A549 (cell line): ENCODE measurements at regions of chr3 and their contacts with region 1.

Region 1: GRCh38 chr3:78633626-78634025 is 1134.2 kb downstream of the ROBO1 start:
- DNase-seq: no peak
- ATAC-seq: no peak
- H3K4me3 ChIP-seq: no peak overlapping the region
- H3K27ac ChIP-seq: no peak overlapping the region
- H3K4me1 ChIP-seq: no peaks in the 10 kb centered on the region
- CTCF ChIP-seq: no peak
- EP300 ChIP-seq: no peak
- POLR2A ChIP-seq: no peak
- RAD21 ChIP-seq: no peak

Region 2: GRCh38 chr3:78645628-78646310 is 12.1 kb after region 1 on chr3:
- CTCF ChIA-PET with region 1: interaction called, 12 read pairs
- POLR2A ChIA-PET with region 1: no interaction called
- DNase-seq: peak; percentile 18 to 79
- ATAC-seq: peak in 1 of 2 experiments; percentile 74; a peak in 3 of 6 replicates
- H3K4me3 ChIP-seq: no peak overlapping the region
- H3K27ac ChIP-seq: no peak overlapping the region
- H3K4me1 ChIP-seq: no peaks in the 10 kb centered on the region
- CTCF ChIP-seq: peak; percentile 80
- EP300 ChIP-seq: no peak
- POLR2A ChIP-seq: no peak
- RAD21 ChIP-seq: peak; percentile 86 to 89